ENCODE measurements at regions of chr11 and their contacts with region 1.

Region 1: GRCh38 chr11:34599406-34599901 is 21.4 kb upstream of the EHF start:
- DNase-seq: peak; percentile 91
- ATAC-seq: peak; percentile 60
- H3K4me3 ChIP-seq: peak overlapping the region in 1 of 2 experiments; percentile 27; a peak in 1 of 4 replicates
- H3K27ac ChIP-seq: peak overlapping the region; percentile 92
- H3K4me1 ChIP-seq: peaks cover 51 to 63% of the 10 kb centered on the region in 2 experiments
- H3K27me3 ChIP-seq: no peaks in the 10 kb centered on the region
- CTCF ChIP-seq: no peak
- POLR2A ChIP-seq: no peak
- RAD21 ChIP-seq: peak; percentile 39

Region 2: GRCh38 chr11:34480314-34480713 is 119.1 kb before region 1 on chr11:
- CTCF ChIA-PET with region 1: no interaction called
- POLR2A ChIA-PET with region 1: no interaction called
- RAD21 ChIA-PET with region 1: no interaction called
- intact Hi-C with region 1: no loop called
- DNase-seq: no peak
- ATAC-seq: no peak
- H3K4me3 ChIP-seq: no peak overlapping the region
- H3K27ac ChIP-seq: no peak overlapping the region
- H3K4me1 ChIP-seq: peaks cover 12 to 30% of the 10 kb centered on the region in 2 experiments; a peak in 3 of 4 replicates
- H3K27me3 ChIP-seq: no peaks in the 10 kb centered on the region
- CTCF ChIP-seq: no peak
- POLR2A ChIP-seq: no peak
- RAD21 ChIP-seq: no peak

Region 3: DNA sequence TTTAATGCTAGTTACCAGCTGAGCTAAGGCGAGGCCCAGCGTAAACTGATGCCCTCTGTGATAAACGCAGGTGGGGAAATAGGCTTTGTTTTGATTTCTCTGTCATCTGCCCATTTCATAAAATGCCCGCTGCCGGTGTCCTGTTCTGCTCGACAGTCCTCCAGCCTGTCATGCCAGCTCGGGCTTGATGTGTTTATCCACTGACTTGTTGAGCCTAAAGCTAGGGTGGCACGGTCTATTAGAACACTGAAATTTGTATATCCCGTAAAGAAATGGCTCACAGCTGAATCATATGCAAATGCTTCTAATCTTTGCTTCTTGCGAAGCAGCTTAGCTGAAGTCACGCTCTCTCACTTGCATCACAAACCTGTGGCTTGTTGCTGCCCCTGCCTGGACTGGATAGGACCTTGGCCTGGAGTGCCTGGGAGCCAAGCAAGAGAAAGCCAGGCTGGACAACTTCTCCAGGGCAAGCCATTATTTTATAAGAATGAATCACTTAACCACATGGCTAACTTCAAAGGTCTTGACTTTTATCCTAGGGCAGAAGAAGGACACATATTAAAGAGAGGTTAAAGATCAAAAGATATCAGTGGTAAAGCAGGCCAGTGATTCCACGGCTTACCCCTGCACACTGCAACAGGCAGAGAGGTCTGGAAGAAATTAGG is 54.5 kb after region 1 on chr11:
- CTCF ChIA-PET with region 1: interaction called, 3 read pairs
- POLR2A ChIA-PET with region 1: interaction called, 4 read pairs
- RAD21 ChIA-PET with region 1: interaction called, 3 to 5 read pairs
- intact Hi-C with region 1: loop called (anchors 2 kb)
- DNase-seq: peak; percentile 93
- ATAC-seq: peak; percentile 92
- H3K4me3 ChIP-seq: peak overlapping the region in 1 of 2 experiments; percentile 12; a peak in 1 of 4 replicates
- H3K27ac ChIP-seq: peak overlapping the region; percentile 50
- H3K4me1 ChIP-seq: peaks cover 35 to 75% of the 10 kb centered on the region in 2 experiments
- H3K27me3 ChIP-seq: no peaks in the 10 kb centered on the region
- CTCF ChIP-seq: peak in 1 of 3 experiments; percentile 8; a peak in 2 of 6 replicates
- POLR2A ChIP-seq: no peak
- RAD21 ChIP-seq: peak; percentile 75

Region 4: GRCh38 chr11:34680918-34681554 is 81.6 kb after region 1 on chr11:
- CTCF ChIA-PET with region 1: no interaction called
- POLR2A ChIA-PET with region 1: no interaction called
- RAD21 ChIA-PET with region 1: no interaction called
- intact Hi-C with region 1: loop called (anchors 5 kb)
- DNase-seq: peak; percentile 86
- ATAC-seq: peak; percentile 67
- H3K4me3 ChIP-seq: peak overlapping the region in 1 of 2 experiments; percentile 2; a peak in 2 of 4 replicates
- H3K27ac ChIP-seq: peak overlapping the region; percentile 27; the same call in 1 of the 2 replicates
- H3K4me1 ChIP-seq: peaks cover 42 to 81% of the 10 kb centered on the region in 2 experiments
- H3K27me3 ChIP-seq: no peaks in the 10 kb centered on the region
- CTCF ChIP-seq: no peak
- POLR2A ChIP-seq: no peak
- RAD21 ChIP-seq: peak; percentile 22; the same call in 1 of the 2 replicates

Region 5: DNA sequence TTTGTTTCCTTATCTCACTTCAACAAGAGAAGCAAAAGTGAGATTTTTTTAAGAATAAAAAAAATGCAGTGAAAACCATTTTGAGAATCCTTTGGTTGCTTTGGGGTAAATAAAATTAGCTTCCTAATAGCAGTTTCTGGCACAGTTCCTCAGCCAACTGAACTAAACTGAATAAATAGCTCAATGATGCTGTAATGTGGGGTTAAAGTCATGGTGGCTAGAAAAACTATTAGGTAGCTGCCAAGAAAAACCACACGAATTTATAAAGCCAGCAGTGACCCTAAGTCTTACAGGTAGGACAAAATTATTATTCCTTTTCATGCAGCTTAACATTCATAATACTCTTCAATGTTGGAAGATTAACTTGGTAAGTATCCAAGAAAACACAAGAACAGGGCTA is 174.4 kb after region 1 on chr11:
- CTCF ChIA-PET with region 1: no interaction called
- POLR2A ChIA-PET with region 1: no interaction called
- RAD21 ChIA-PET with region 1: no interaction called
- intact Hi-C with region 1: loop called (anchors 10 kb)
- DNase-seq: no peak
- ATAC-seq: no peak
- H3K4me3 ChIP-seq: no peak overlapping the region
- H3K27ac ChIP-seq: no peak overlapping the region
- H3K4me1 ChIP-seq: no peaks in the 10 kb centered on the region
- H3K27me3 ChIP-seq: no peaks in the 10 kb centered on the region
- CTCF ChIP-seq: no peak
- POLR2A ChIP-seq: no peak
- RAD21 ChIP-seq: no peak

Region 6: DNA sequence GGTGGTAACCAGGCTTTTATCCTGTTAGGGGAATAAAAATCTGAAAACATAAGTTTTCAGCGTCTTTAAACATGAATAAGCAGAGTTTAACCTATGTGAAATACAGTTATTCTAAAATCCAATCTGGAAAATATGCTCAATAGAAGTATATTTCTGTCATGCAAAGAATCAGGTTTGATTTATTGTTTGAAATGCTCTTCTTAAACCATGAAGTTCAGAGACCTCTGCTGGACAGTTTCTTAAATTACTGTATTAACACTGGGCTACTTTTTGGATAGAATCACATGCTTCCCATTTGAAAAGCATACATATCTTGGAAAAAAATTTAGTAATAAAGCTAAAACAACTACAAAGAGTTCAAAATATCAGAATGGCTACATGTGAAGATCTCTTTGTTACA is 291.4 kb after region 1 on chr11:
- CTCF ChIA-PET with region 1: no interaction called
- POLR2A ChIA-PET with region 1: no interaction called
- RAD21 ChIA-PET with region 1: no interaction called
- intact Hi-C with region 1: no loop called
- DNase-seq: peak; percentile 56
- ATAC-seq: 0 out of 2 replicates have a peak, but pooled peaks have one; percentile 46
- H3K4me3 ChIP-seq: no peak overlapping the region
- H3K27ac ChIP-seq: no peak overlapping the region
- H3K4me1 ChIP-seq: peaks cover 5 to 10% of the 10 kb centered on the region in 2 experiments; a peak in 2 of 4 replicates
- H3K27me3 ChIP-seq: no peaks in the 10 kb centered on the region
- CTCF ChIP-seq: peak; percentile 40 to 83 (median 67)
- POLR2A ChIP-seq: no peak
- RAD21 ChIP-seq: peak; percentile 90

Region 7: GRCh38 chr11:35363854-35364780 is 764.7 kb after region 1 on chr11:
- CTCF ChIA-PET with region 1: no interaction called
- POLR2A ChIA-PET with region 1: no interaction called
- RAD21 ChIA-PET with region 1: no interaction called
- intact Hi-C with region 1: no loop called
- DNase-seq: peak; percentile 29
- ATAC-seq: peak; percentile 80
- H3K4me3 ChIP-seq: no peak overlapping the region
- H3K27ac ChIP-seq: peak overlapping the region; percentile 53
- H3K4me1 ChIP-seq: peaks cover 12 to 22% of the 10 kb centered on the region in 2 experiments
- H3K27me3 ChIP-seq: no peaks in the 10 kb centered on the region
- CTCF ChIP-seq: no peak
- POLR2A ChIP-seq: no peak
- RAD21 ChIP-seq: no peak